Esophagus muscularis mucosa (tissue), 4 donors: ENCODE measurements at regions of chr12 and their contacts with region 1.

Region 1: GRCh38 chr12:12716793-12717585 is at the start of gene CDKN1B:
- DNase-seq: peak; percentile 98
- H3K4me3 ChIP-seq: peak within 1 kb of the TSS; percentile 75 to 95 (median 86)
- H3K27ac ChIP-seq: peak within 1 kb of the TSS; percentile 98 to 100 (median 100)
- H3K4me1 ChIP-seq: peaks cover 54 to 67% (median 63%) of the 10 kb centered on the region in 4 donors
- H3K27me3 ChIP-seq: no peaks in the 10 kb centered on the region
- CTCF ChIP-seq: no peak
- EP300 ChIP-seq: no peak
- POLR2A ChIP-seq: peak; percentile 49
- total RNA-seq, gene CDKN1B: 48.7 to 97.4 (median 70.6) TPM

Region 2: GRCh38 chr12:12356886-12357718 is 359.9 kb before region 1 on chr12 and contains the start of gene BORCS5:
- intact Hi-C with region 1: loop called (anchors 10 kb)
- DNase-seq: peak; percentile 99
- H3K4me3 ChIP-seq: peak within 1 kb of the TSS; percentile 75 to 96 (median 80)
- H3K27ac ChIP-seq: peak within 1 kb of the TSS; percentile 94 to 98 (median 98)
- H3K4me1 ChIP-seq: peaks cover 13 to 24% (median 21%) of the 10 kb centered on the region in 4 donors
- H3K27me3 ChIP-seq: no peaks in the 10 kb centered on the region
- CTCF ChIP-seq: no peak
- EP300 ChIP-seq: no peak
- POLR2A ChIP-seq: peak; percentile 95
- total RNA-seq, gene BORCS5: 16.5 to 25.0 (median 19.0) TPM